Transverse colon (tissue), 4 donors: ENCODE measurements at regions of chr1 and their contacts with region 1.

Region 1: GRCh38 chr1:115506926-115507589 is 134.7 kb upstream of the VANGL1 start:
- DNase-seq: no peak
- H3K4me3 ChIP-seq: no peak overlapping the region
- H3K27ac ChIP-seq: no peak overlapping the region
- H3K4me1 ChIP-seq: no peaks in the 10 kb centered on the region
- H3K27me3 ChIP-seq: no peaks in the 10 kb centered on the region
- CTCF ChIP-seq: peak in 1 of 5 experiments; percentile 12
- EP300 ChIP-seq: no peak
- POLR2A ChIP-seq: no peak

Region 2: DNA sequence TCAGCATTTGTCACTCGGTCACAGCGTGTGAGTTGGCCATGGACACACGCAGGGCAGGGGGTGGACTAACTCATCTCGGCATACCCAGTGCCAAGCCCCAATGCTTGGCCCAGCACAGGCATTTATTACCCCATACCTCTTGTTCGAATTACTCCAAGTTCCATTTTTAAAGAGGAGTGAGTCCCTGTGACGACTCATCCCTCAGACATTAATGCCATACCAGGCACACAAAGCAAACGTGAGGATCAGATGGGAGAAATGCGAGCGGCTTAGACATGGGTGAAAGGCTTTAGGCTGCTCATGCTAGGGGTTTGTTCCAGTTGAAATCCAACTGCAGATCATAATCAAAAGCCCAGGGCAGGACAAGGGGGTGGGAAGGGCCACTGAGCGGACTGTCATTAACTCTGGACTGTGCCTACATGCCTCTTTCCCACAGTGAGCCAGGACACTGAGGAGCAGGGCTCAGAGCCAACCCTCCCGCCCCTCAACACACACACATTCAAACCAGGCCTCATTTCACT is 50.6 kb before region 1 on chr1:
- in situ Hi-C with region 1: no loop called
- intact Hi-C with region 1: loop called (anchors 5 kb)
- DNase-seq: no peak
- H3K4me3 ChIP-seq: no peak overlapping the region
- H3K27ac ChIP-seq: no peak overlapping the region
- H3K4me1 ChIP-seq: no peaks in the 10 kb centered on the region
- H3K27me3 ChIP-seq: no peaks in the 10 kb centered on the region
- CTCF ChIP-seq: no peak
- EP300 ChIP-seq: no peak
- POLR2A ChIP-seq: no peak